ENCODE measurements at regions of chr11 and their contacts with region 1.

Region 1: GRCh38 chr11:72635309-72635915 is 38.8 kb downstream of the PDE2A start:
- DNase-seq: no peak
- H3K4me3 ChIP-seq: no peak overlapping the region
- H3K27ac ChIP-seq: peak overlapping the region in 3 of 4 donors; percentile 13 to 85 (median 76)
- H3K4me1 ChIP-seq: peaks cover under 1 to 89% (median 37%) of the 10 kb centered on the region in 3 donors
- H3K27me3 ChIP-seq: peaks cover 0 to 39% (median 0%) of the 10 kb centered on the region in 4 donors
- CTCF ChIP-seq: no peak
- POLR2A ChIP-seq: no peak

Region 2: DNA sequence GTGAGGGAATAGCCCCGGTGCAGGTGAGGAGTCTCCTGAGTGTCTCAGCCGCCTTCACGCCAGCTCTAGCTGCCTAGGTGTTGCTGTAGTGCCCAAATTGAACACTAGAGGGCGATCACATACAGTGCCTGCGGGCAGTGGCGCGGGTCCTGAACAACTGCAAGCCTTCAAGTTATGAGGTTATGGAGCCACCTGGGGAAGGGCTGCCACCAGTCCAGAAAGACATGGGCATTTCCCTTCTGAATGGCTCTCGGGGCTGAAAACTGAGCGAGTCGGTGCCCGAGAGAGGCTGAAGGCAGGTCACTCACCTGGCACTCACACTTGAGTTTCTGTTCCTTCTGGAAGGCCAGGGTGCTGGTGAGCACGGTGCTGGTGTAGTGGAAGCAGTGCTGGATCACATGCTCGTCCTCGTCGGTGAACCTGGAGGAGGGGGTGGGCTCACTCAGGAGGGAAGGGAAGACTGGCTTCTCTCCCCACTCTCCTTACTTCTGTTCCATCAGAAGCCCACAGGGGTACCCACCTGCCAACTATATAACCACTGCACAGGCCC is 49.6 kb before region 1 on chr11:
- intact Hi-C with region 1: loop called (anchors 5 kb)
- DNase-seq: no peak
- H3K4me3 ChIP-seq: no peak overlapping the region
- H3K27ac ChIP-seq: no peak overlapping the region
- H3K4me1 ChIP-seq: peaks cover 5 to 34% (median 10%) of the 10 kb centered on the region in 3 donors
- H3K27me3 ChIP-seq: peaks cover 0 to 71% (median 7%) of the 10 kb centered on the region in 4 donors
- CTCF ChIP-seq: peak; percentile 76 to 94 (median 90)
- POLR2A ChIP-seq: no peak

Region 3: DNA sequence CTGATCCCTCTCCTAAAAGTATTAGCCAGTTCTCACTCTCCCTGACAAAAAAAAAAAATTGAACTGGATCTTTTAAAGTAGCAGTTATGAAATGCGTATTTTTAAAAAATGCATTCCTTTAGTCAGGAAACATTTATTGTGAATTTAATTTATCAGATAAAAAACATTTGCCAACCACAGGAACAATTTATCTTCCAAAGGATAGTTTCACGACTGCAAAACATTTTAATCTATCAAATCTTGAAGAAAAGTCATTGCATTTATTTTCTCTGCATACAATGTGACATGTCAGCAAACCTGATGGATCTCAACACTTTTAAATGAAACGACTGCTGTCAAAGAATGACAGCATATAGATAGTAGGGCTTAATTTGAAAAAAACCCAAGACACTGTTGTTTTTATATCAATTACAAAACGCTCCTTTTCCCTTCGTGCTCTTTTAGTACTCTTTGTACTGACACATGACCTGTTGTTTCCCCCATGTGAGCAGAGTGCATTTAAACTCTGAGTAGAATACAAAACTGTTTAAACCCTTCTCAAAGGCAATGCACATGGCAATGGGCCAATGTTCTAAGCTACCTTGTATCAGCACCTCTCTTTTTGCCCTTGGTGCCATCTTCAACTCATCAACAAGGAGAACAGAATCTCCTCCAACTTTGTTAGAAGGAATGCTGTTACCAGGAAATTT is 285.8 kb after region 1 on chr11:
- intact Hi-C with region 1: no loop called
- DNase-seq: no peak
- H3K4me3 ChIP-seq: no peak overlapping the region
- H3K27ac ChIP-seq: no peak overlapping the region
- H3K4me1 ChIP-seq: peaks cover 0 to 5% (median 0%) of the 10 kb centered on the region in 3 donors
- H3K27me3 ChIP-seq: no peaks in the 10 kb centered on the region
- CTCF ChIP-seq: no peak
- POLR2A ChIP-seq: no peak